Activated B cell treated with CpG ODN at 0.5 μM for 24 hours (primary cell): ENCODE measurements at regions of chr19 and their contacts with region 1.

Region 1: GRCh38 chr19:48255376-48256303 is at the start of gene CARD8:
- DNase-seq: peak; percentile 73
- ATAC-seq: peak; percentile 80
- H3K4me3 Mint-ChIP-seq: peak within 1 kb of the TSS; percentile 99
- H3K27ac Mint-ChIP-seq: peak within 1 kb of the TSS; percentile 100
- H3K4me1 Mint-ChIP-seq: peaks cover 62% of the 10 kb centered on the region
- H3K27me3 Mint-ChIP-seq: no peaks in the 10 kb centered on the region
- CTCF ChIP-seq: no peak
- total RNA-seq, gene CARD8: 103 and 109 TPM in 2 replicates

Region 2: DNA sequence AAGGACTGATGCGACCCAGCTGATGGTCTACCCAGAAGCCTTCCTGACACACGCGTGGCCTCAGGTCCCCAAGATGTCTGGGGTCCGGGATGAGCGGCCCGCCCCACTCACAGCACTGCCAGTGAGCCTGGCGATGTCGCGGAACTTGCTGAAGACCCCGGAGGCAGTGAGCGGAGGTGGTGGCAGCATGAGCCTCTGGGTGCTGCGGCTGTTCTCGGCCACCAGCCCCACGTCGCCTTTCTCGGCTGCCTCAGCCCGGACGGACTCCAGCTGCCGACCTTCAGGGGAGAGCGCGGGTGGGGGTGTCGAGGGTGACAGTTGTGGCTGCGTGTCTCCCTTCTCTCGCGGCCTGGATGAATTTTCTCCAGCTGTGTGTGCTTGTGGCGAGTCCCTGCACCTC is 118.2 kb before region 1 on chr19:
- CTCF ChIA-PET with region 1: no interaction called
- POLR2A ChIA-PET with region 1: no interaction called
- intact Hi-C with region 1: no loop called
- DNase-seq: no peak
- ATAC-seq: no peak
- H3K4me3 Mint-ChIP-seq: no peak overlapping the region
- H3K27ac Mint-ChIP-seq: no peak overlapping the region
- H3K4me1 Mint-ChIP-seq: no peaks in the 10 kb centered on the region
- H3K27me3 Mint-ChIP-seq: no peaks in the 10 kb centered on the region
- CTCF ChIP-seq: no peak

Region 3: GRCh38 chr19:48152551-48152950 is 103.1 kb before region 1 on chr19:
- CTCF ChIA-PET with region 1: interaction called, 6 read pairs
- POLR2A ChIA-PET with region 1: no interaction called
- intact Hi-C with region 1: loop called (anchors 1 kb)
- DNase-seq: peak; percentile 52
- ATAC-seq: peak; percentile 74
- H3K4me3 Mint-ChIP-seq: no peak overlapping the region
- H3K27ac Mint-ChIP-seq: no peak overlapping the region
- H3K4me1 Mint-ChIP-seq: peaks cover 2% of the 10 kb centered on the region
- H3K27me3 Mint-ChIP-seq: no peaks in the 10 kb centered on the region
- CTCF ChIP-seq: peak; percentile 44

Region 4: GRCh38 chr19:48203732-48204628 is 51.7 kb before region 1 on chr19:
- CTCF ChIA-PET with region 1: interaction called, 20 read pairs
- POLR2A ChIA-PET with region 1: interaction called, 28 read pairs
- intact Hi-C with region 1: loop called (anchors 1 kb)
- DNase-seq: peak; percentile 79
- ATAC-seq: peak; percentile 100
- H3K4me3 Mint-ChIP-seq: no peak overlapping the region
- H3K27ac Mint-ChIP-seq: no peak overlapping the region
- H3K4me1 Mint-ChIP-seq: peaks cover 6% of the 10 kb centered on the region
- H3K27me3 Mint-ChIP-seq: no peaks in the 10 kb centered on the region
- CTCF ChIP-seq: no peak

Region 5: DNA sequence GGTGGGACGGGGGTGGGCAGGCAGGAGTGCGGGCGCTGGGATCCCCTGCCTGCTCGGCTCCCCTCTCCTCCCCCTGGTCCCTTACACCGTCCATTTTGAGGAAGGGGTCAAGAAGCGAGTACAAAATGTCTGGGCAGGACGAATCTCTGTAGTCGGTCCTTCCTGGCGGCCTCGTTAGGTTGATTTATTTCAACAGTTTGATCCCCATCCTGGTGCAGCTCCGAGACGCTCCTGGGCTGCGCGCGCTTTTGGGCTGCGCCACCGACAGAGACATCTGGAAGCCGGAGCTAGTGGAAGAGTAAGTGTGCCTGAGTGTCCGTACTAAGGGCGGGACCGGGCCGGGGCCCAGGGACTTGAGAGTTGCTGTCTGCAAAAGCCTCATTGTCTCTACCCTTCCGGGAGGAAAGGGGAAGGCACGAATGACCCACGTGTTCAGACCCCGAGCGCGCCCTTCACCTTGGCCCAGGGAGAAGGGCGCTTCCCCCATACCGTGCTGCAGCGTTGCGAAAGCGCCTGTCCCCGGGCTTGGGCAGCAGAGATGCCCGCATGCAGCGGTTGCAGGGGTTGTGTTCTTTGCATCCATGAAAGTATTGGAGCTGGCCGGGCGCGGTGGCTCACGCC is 16.0 kb after region 1 on chr19:
- CTCF ChIA-PET with region 1: interaction called, 16 read pairs
- POLR2A ChIA-PET with region 1: interaction called, 3 read pairs
- intact Hi-C with region 1: no loop called
- DNase-seq: peak; percentile 37
- ATAC-seq: peak; percentile 75
- H3K4me3 Mint-ChIP-seq: peak overlapping the region; percentile 95
- H3K27ac Mint-ChIP-seq: peak overlapping the region; percentile 80
- H3K4me1 Mint-ChIP-seq: peaks cover 14% of the 10 kb centered on the region
- H3K27me3 Mint-ChIP-seq: no peaks in the 10 kb centered on the region
- CTCF ChIP-seq: no peak

Region 6: DNA sequence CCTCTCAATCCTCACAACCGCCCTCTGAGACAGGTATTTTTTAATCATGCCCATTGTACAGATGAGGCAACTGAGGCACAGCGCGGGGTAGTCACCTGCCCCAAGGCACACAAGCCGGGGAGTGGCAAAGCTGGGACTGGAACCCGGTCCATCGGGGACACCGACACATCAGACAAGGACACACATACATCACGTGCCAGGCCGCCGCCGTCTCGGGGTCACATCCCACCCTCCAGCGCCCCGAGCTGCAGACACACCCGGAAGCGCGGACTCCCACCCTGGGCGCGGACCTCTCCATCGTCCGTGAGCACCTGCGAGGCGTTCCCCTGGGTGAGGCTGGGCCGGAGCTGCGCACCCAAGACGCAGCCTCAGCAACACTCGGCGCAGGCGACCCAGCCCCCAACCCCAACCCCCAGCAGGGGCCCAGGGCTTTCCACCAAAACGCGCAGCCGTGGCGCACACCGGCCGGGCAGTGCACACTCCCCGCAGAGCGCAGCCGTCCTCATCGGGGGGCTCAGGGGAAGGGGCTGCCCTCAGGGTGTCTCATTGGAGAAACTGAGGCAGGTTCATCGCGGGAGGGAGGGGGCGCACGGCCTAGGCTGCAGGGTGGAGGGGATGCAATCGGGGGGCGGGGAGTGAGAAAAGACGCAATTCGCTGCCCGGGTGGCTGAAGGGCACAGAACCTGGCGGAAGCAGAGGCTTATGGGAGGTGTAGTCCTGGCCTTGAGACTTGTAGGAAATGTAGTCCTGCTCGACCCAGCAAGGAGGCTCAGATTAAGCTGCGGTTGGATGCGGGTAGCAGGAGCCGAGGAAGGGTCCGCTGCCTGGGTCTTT is 257.9 kb after region 1 on chr19:
- CTCF ChIA-PET with region 1: no interaction called
- POLR2A ChIA-PET with region 1: no interaction called
- intact Hi-C with region 1: loop called (anchors 5 kb)
- DNase-seq: peak; percentile 51
- ATAC-seq: peak; percentile 90
- H3K4me3 Mint-ChIP-seq: no peak overlapping the region
- H3K27ac Mint-ChIP-seq: peak overlapping the region; percentile 69
- H3K4me1 Mint-ChIP-seq: peaks cover 17% of the 10 kb centered on the region
- H3K27me3 Mint-ChIP-seq: peaks cover 2% of the 10 kb centered on the region
- CTCF ChIP-seq: no peak